Aorta (tissue), 5 donors: ENCODE measurements at regions of chr7 and their contacts with region 1.

Region 1: GRCh38 chr7:99090771-99091542 is 53.0 kb downstream of the SMURF1 start:
- DNase-seq: no peak
- ATAC-seq: no peak
- H3K4me3 ChIP-seq: no peak overlapping the region
- H3K27ac ChIP-seq: no peak overlapping the region
- H3K4me1 ChIP-seq: peaks cover 0 to 5% of the 10 kb centered on the region in 2 donors
- H3K27me3 ChIP-seq: no peaks in the 10 kb centered on the region

Region 2: DNA sequence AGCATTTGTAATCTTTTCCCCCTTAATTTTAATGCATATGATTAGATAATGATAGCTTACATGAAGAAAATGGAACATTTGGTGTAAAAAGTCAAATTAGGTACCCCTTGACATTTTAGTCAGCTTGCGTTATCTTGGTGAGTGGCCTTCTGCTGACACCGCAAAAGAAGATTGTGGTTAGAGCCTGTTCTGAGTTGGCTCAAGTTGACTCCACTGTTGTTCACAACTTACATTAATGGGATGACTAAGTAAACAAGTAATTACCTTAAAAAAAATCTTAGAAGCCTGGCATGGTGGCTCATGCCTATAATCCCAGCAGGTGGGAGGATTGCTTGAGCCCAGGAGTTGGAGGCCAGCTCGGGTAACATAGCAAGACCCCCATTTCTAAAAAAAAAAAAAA is 188.4 kb before region 1 on chr7:
- intact Hi-C with region 1: no loop called
- DNase-seq: no peak
- ATAC-seq: no peak
- H3K4me3 ChIP-seq: no peak overlapping the region
- H3K27ac ChIP-seq: no peak overlapping the region
- H3K4me1 ChIP-seq: no peaks in the 10 kb centered on the region
- H3K27me3 ChIP-seq: no peaks in the 10 kb centered on the region

Region 3: GRCh38 chr7:99050971-99051370 is 40.0 kb before region 1 on chr7:
- intact Hi-C with region 1: loop called (anchors 5 to 10 kb)
- DNase-seq: no peak
- ATAC-seq: no peak
- H3K4me3 ChIP-seq: no peak overlapping the region
- H3K27ac ChIP-seq: no peak overlapping the region
- H3K4me1 ChIP-seq: no peaks in the 10 kb centered on the region
- H3K27me3 ChIP-seq: no peaks in the 10 kb centered on the region